AG04450 (cell line): ENCODE measurements at regions of chr3 and their contacts with region 1.

Region 1: DNA sequence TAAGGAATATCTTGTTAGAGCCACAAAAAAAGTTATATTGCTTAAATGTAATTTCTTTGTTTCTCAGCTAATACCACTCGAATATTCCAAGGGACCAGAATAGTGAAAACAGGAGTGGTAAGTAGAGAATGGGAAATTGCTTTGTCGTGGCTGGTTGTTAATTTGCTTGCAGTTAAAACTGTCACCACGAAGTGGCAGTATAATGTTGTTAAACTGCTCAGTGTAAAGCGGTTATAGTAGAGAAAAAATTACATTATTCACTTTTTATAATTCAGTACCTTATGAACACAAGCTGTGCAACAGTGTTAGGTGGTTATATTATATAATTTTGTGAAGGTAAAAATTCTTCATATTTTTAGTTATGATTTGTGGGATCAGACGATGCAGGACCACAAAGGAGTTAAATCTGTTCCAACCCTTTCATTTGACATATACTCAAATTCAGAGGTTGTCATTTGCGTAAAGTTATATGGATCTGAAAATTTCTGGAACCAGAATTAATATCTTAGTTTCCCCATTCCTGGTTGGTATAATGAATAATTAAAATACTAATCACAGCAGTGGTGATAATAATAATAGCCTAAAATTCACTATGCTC is 171.8 kb downstream of the FEZF2 start:
- DNase-seq: no peak
- H3K4me3 ChIP-seq: no peak overlapping the region
- H3K27ac ChIP-seq: no peak overlapping the region
- H3K27me3 ChIP-seq: no peaks in the 10 kb centered on the region
- CTCF ChIP-seq: peak; percentile 61

Region 2: DNA sequence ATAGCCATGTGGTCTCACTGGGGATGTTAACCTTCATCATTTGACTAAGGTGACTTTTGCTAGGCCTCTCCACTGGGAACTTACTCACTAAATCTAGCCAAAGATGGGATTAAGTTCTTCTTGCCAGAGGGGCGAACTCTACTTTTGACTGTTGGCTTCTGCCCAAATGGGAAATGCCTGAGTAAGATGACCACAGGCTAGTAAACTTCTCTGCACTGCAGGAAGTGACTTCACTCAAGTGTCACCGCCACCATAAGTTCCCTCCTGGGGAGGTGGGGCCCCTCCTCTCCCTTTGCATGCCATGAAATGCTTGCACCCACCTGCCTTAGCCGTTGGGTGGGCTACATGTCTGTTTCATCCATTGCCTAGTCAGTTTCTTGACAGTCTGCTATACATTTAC is 216.5 kb before region 1 on chr3:
- CTCF ChIA-PET with region 1: no interaction called
- POLR2A ChIA-PET with region 1: no interaction called
- DNase-seq: peak; percentile 8
- H3K4me3 ChIP-seq: no peak overlapping the region
- H3K27ac ChIP-seq: no peak overlapping the region
- H3K27me3 ChIP-seq: no peaks in the 10 kb centered on the region
- CTCF ChIP-seq: no peak

Region 3: GRCh38 chr3:62188681-62189383 is 12.7 kb before region 1 on chr3:
- CTCF ChIA-PET with region 1: interaction called, 35 read pairs
- POLR2A ChIA-PET with region 1: no interaction called
- DNase-seq: peak; percentile 54
- H3K4me3 ChIP-seq: no peak overlapping the region
- H3K27ac ChIP-seq: no peak overlapping the region
- H3K27me3 ChIP-seq: no peaks in the 10 kb centered on the region
- CTCF ChIP-seq: peak; percentile 81

Region 4: GRCh38 chr3:62211675-62212429 is 10.3 kb after region 1 on chr3:
- CTCF ChIA-PET with region 1: interaction called, 27 read pairs
- POLR2A ChIA-PET with region 1: no interaction called
- DNase-seq: no peak
- H3K4me3 ChIP-seq: no peak overlapping the region
- H3K27ac ChIP-seq: no peak overlapping the region
- H3K27me3 ChIP-seq: no peaks in the 10 kb centered on the region
- CTCF ChIP-seq: peak; percentile 45

Region 5: DNA sequence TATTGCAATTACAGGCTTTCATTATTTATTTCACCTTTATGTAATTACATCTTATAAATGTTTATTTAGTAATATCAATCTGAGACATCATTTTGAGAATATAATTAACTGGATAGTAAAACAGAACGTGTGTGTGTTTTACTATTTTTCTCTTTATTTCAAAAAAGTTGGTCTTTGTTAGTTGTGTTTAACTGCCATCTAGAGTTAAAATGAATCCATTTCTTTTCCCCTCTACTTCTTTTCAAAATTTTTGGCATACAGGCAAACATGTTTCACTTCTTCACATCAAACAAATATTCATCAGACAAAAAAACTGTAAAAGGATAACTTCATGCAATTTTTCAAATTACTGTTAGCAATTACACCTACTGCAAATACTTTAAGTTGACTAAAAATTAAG is 110.7 kb after region 1 on chr3:
- CTCF ChIA-PET with region 1: interaction called, 22 read pairs
- POLR2A ChIA-PET with region 1: no interaction called
- DNase-seq: no peak
- H3K4me3 ChIP-seq: no peak overlapping the region
- H3K27ac ChIP-seq: no peak overlapping the region
- H3K27me3 ChIP-seq: no peaks in the 10 kb centered on the region
- CTCF ChIP-seq: no peak

Region 6: GRCh38 chr3:62318750-62319569 is 117.4 kb after region 1 on chr3:
- CTCF ChIA-PET with region 1: interaction called, 13 read pairs
- POLR2A ChIA-PET with region 1: no interaction called
- DNase-seq: peak; percentile 55
- H3K4me3 ChIP-seq: peak overlapping the region; percentile 84
- H3K27ac ChIP-seq: peak overlapping the region; percentile 54
- H3K27me3 ChIP-seq: no peaks in the 10 kb centered on the region
- CTCF ChIP-seq: no peak

Region 7: DNA sequence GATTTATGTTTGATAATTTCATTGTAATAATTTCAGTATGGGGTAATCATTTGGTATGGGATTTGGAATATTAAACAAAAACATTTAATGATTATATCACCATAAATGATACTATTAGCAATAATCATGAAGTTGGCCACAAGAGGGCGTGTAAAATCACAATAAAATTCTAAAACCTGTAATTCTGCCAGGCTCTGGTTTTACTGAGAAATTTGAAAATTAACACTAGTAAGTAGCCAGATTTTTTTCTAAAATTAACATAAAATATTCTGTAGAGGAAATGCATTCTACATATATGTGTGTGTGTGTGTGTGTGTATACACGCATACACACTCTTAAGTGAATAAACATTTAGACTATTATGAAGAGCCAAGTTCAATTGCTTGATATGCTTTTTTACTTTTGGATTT is 131.3 kb after region 1 on chr3:
- CTCF ChIA-PET with region 1: interaction called, 20 read pairs
- POLR2A ChIA-PET with region 1: no interaction called
- DNase-seq: no peak
- H3K4me3 ChIP-seq: no peak overlapping the region
- H3K27ac ChIP-seq: no peak overlapping the region
- H3K27me3 ChIP-seq: no peaks in the 10 kb centered on the region
- CTCF ChIP-seq: peak; percentile 56

Region 8: GRCh38 chr3:62558549-62559112 is 357.1 kb after region 1 on chr3:
- CTCF ChIA-PET with region 1: interaction called, 43 read pairs
- POLR2A ChIA-PET with region 1: no interaction called
- DNase-seq: no peak
- H3K4me3 ChIP-seq: no peak overlapping the region
- H3K27ac ChIP-seq: no peak overlapping the region
- H3K27me3 ChIP-seq: no peaks in the 10 kb centered on the region
- CTCF ChIP-seq: peak; percentile 68